ENCODE measurements at regions of chrX and their contacts with region 1.

Region 1: DNA sequence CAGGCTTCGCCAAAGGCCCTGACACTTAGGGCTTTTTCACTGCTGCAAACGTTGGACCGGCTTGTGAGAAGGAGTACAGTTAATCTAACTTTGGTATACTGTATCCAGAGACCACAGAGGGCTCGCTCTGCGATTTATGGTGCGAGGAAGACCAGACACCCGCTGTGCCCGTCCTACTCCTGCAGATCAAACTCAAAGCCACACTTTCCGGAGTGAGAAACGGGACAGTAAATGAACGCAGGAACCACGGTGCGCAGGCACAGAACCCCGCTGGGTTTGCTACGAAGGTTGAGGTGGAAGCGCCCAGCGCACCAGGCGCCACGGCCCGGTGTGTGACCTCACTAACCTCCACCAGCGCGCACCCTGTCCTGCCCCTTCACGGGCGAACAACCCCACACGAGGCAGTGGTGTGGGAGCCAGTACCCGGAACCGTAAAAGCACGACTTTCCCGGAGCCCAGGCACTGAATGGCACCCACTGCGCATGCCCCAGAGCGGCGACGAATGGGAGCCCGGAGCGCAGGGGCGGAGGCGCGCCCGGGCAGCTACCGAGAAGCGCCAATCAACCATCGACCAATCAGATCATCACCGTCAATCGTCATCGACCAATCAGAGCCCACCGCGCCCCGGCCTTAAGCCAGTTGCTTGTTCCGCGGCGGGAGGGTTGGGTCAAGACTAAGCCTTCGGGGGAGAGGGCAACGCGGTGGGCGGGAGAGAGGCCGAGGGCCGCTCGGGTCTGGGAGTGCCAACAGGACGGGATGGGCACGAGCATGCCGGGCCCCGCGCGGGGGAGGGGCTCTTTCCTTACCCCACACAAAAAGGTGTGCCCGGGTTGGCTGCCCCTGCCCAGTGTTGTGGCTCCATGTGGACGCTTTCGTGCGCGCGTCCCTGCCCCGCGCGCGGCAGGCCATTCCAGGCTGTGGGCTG is 21.3 kb upstream of the WDR45 start:
- DNase-seq: peak; percentile 93
- ATAC-seq: peak; percentile 91
- H3K4me3 ChIP-seq: peak overlapping the region; percentile 50 to 66 (median 60)
- H3K4me3 Mint-ChIP-seq: peak overlapping the region; percentile 94
- H3K27ac ChIP-seq: peak overlapping the region; percentile 77 to 80
- H3K27ac Mint-ChIP-seq: peak overlapping the region; percentile 95
- H3K4me1 ChIP-seq: peaks cover 3 to 13% of the 10 kb centered on the region in 2 donors
- H3K4me1 Mint-ChIP-seq: peaks cover 9% of the 10 kb centered on the region
- H3K27me3 ChIP-seq: no peaks in the 10 kb centered on the region
- H3K27me3 Mint-ChIP-seq: no peaks in the 10 kb centered on the region
- CTCF ChIP-seq: no peak

Region 2: GRCh38 chrX:48897621-48898306 is 203.2 kb before region 1 on chrX and contains the starts of genes PQBP1 and TIMM17B:
- CTCF ChIA-PET with region 1: no interaction called
- POLR2A ChIA-PET with region 1: no interaction called
- intact Hi-C with region 1: loop called (anchors 10 kb)
- DNase-seq: peak; percentile 95
- ATAC-seq: peak; percentile 88
- H3K4me3 ChIP-seq: peak within 1 kb of the TSS; percentile 81 to 91 (median 86)
- H3K4me3 Mint-ChIP-seq: peak within 1 kb of the TSS; percentile 89
- H3K27ac ChIP-seq: peak within 1 kb of the TSS; percentile 93 to 94
- H3K27ac Mint-ChIP-seq: peak within 1 kb of the TSS; percentile 94
- H3K4me1 ChIP-seq: peaks cover 12 to 20% of the 10 kb centered on the region in 2 donors
- H3K4me1 Mint-ChIP-seq: peaks cover 22% of the 10 kb centered on the region
- H3K27me3 ChIP-seq: no peaks in the 10 kb centered on the region
- H3K27me3 Mint-ChIP-seq: no peaks in the 10 kb centered on the region
- CTCF ChIP-seq: no peak
- total RNA-seq, gene PQBP1: 89.5 and 89.9 TPM in 2 replicates
- total RNA-seq, gene TIMM17B: 50.0 and 54.3 TPM in 2 replicates

Region 3: GRCh38 chrX:49002091-49002935 is 98.7 kb before region 1 on chrX and contains the start of gene GRIPAP1:
- CTCF ChIA-PET with region 1: no interaction called
- POLR2A ChIA-PET with region 1: interaction called, 3 read pairs
- intact Hi-C with region 1: loop called (anchors 1 kb)
- DNase-seq: peak; percentile 93
- ATAC-seq: peak; percentile 85
- H3K4me3 ChIP-seq: peak within 1 kb of the TSS; percentile 66 to 93 (median 86)
- H3K4me3 Mint-ChIP-seq: peak within 1 kb of the TSS; percentile 95
- H3K27ac ChIP-seq: peak within 1 kb of the TSS; percentile 97 to 99
- H3K27ac Mint-ChIP-seq: peak within 1 kb of the TSS; percentile 98
- H3K4me1 ChIP-seq: peaks cover 8 to 14% of the 10 kb centered on the region in 2 donors
- H3K4me1 Mint-ChIP-seq: peaks cover 28% of the 10 kb centered on the region
- H3K27me3 ChIP-seq: no peaks in the 10 kb centered on the region
- H3K27me3 Mint-ChIP-seq: no peaks in the 10 kb centered on the region
- CTCF ChIP-seq: no peak
- total RNA-seq, gene GRIPAP1: 143 and 150 TPM in 2 replicates

Region 4: GRCh38 chrX:49073601-49074571 is 27.1 kb before region 1 on chrX and contains the start of gene PRAF2:
- CTCF ChIA-PET with region 1: no interaction called
- POLR2A ChIA-PET with region 1: interaction called, 9 read pairs
- intact Hi-C with region 1: loop called (anchors 1 kb)
- DNase-seq: peak; percentile 89
- ATAC-seq: peak; percentile 99
- H3K4me3 ChIP-seq: peak within 1 kb of the TSS in 4 of 5 experiments; percentile 55 to 70 (median 64)
- H3K4me3 Mint-ChIP-seq: peak within 1 kb of the TSS; percentile 82
- H3K27ac ChIP-seq: peak within 1 kb of the TSS; percentile 54 to 58
- H3K27ac Mint-ChIP-seq: peak within 1 kb of the TSS; percentile 88
- H3K4me1 ChIP-seq: peaks cover 2 to 20% of the 10 kb centered on the region in 2 donors
- H3K4me1 Mint-ChIP-seq: peaks cover 22% of the 10 kb centered on the region
- H3K27me3 ChIP-seq: no peaks in the 10 kb centered on the region
- H3K27me3 Mint-ChIP-seq: no peaks in the 10 kb centered on the region
- CTCF ChIP-seq: no peak
- total RNA-seq, gene PRAF2: 19.0 and 22.5 TPM in 2 replicates

Region 5: DNA sequence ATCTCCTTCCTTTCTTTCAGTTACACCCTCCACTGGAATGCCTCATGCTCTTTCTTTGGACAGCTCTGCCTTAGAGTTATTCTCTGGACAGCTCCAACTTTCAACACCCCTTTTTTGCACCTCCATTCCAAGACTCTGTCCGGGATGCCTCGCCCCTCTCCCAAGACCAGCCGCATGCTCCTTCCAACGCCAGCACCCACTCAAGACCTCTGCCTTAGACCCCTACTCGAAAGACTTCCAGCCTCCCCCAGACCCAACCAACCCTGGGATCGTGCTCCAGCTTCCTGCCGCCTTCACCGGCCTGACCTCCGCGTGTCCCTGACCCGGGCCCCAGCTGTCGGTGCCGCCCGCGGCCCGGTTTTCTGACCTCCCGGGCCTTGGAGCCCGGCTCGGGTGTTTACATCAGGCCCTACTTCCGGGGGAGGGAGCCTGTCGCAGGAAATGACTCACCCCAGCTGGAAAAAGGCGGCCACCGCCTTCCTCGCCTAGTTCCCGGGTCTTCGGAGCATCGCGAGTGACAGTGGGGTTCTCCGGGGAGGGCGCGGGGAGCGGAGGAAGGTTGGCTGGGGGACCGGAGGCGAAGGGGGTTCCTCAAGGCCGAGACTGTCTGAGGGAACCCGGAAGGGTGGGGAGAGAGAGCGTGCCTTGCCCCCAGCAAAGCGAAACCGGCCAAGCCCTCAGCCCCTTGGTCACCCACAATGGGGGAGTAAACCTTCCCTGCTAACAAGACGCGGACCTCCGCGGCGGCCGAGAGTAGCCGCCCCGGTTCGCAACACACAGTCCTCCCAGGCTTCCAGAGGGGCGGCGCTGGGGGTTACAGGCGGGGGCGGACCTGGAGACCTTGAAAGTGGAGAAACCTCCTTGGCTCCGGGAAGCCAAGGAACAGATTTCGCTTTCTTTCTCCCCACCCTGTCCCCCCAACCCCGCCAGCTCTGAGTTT is 21.2 kb before region 1 on chrX and contains the start of gene WDR45:
- CTCF ChIA-PET with region 1: interaction called, 4 read pairs
- POLR2A ChIA-PET with region 1: interaction called, 9 read pairs
- intact Hi-C with region 1: loop called (anchors 1 kb)
- DNase-seq: peak; percentile 78
- ATAC-seq: peak; percentile 79
- H3K4me3 ChIP-seq: peak within 1 kb of the TSS; percentile 27 to 73 (median 67)
- H3K4me3 Mint-ChIP-seq: peak within 1 kb of the TSS; percentile 95
- H3K27ac ChIP-seq: peak within 1 kb of the TSS; percentile 94 to 97
- H3K27ac Mint-ChIP-seq: peak within 1 kb of the TSS; percentile 99
- H3K4me1 ChIP-seq: peaks cover 6 to 8% of the 10 kb centered on the region in 2 donors
- H3K4me1 Mint-ChIP-seq: peaks cover 14% of the 10 kb centered on the region
- H3K27me3 ChIP-seq: no peaks in the 10 kb centered on the region
- H3K27me3 Mint-ChIP-seq: no peaks in the 10 kb centered on the region
- CTCF ChIP-seq: no peak
- total RNA-seq, gene WDR45: 92.0 and 100 TPM in 2 replicates

Region 6: GRCh38 chrX:49120099-49120498 is 19.1 kb after region 1 on chrX:
- CTCF ChIA-PET with region 1: no interaction called
- POLR2A ChIA-PET with region 1: interaction called, 3 read pairs
- intact Hi-C with region 1: loop called (anchors 1 kb)
- DNase-seq: no peak
- ATAC-seq: no peak
- H3K4me3 ChIP-seq: no peak overlapping the region
- H3K4me3 Mint-ChIP-seq: peak overlapping the region; percentile 0
- H3K27ac ChIP-seq: no peak overlapping the region
- H3K27ac Mint-ChIP-seq: no peak overlapping the region
- H3K4me1 ChIP-seq: peaks cover 4 to 18% of the 10 kb centered on the region in 2 donors
- H3K4me1 Mint-ChIP-seq: peaks cover 29% of the 10 kb centered on the region
- H3K27me3 ChIP-seq: no peaks in the 10 kb centered on the region
- H3K27me3 Mint-ChIP-seq: no peaks in the 10 kb centered on the region
- CTCF ChIP-seq: no peak

Region 7: GRCh38 chrX:49226946-49227345 is 126.0 kb after region 1 on chrX:
- CTCF ChIA-PET with region 1: no interaction called
- POLR2A ChIA-PET with region 1: no interaction called
- intact Hi-C with region 1: no loop called
- DNase-seq: no peak
- ATAC-seq: no peak
- H3K4me3 ChIP-seq: no peak overlapping the region
- H3K4me3 Mint-ChIP-seq: no peak overlapping the region
- H3K27ac ChIP-seq: no peak overlapping the region
- H3K27ac Mint-ChIP-seq: no peak overlapping the region
- H3K4me1 ChIP-seq: peaks cover 5 to 17% of the 10 kb centered on the region in 2 donors
- H3K4me1 Mint-ChIP-seq: peaks cover 12% of the 10 kb centered on the region
- H3K27me3 ChIP-seq: no peaks in the 10 kb centered on the region
- H3K27me3 Mint-ChIP-seq: no peaks in the 10 kb centered on the region
- CTCF ChIP-seq: no peak

Measured in B cell (primary cell).